KBM-7 (cell line): ENCODE measurements at regions of chr2 and their contacts with region 1.

Region 1: DNA sequence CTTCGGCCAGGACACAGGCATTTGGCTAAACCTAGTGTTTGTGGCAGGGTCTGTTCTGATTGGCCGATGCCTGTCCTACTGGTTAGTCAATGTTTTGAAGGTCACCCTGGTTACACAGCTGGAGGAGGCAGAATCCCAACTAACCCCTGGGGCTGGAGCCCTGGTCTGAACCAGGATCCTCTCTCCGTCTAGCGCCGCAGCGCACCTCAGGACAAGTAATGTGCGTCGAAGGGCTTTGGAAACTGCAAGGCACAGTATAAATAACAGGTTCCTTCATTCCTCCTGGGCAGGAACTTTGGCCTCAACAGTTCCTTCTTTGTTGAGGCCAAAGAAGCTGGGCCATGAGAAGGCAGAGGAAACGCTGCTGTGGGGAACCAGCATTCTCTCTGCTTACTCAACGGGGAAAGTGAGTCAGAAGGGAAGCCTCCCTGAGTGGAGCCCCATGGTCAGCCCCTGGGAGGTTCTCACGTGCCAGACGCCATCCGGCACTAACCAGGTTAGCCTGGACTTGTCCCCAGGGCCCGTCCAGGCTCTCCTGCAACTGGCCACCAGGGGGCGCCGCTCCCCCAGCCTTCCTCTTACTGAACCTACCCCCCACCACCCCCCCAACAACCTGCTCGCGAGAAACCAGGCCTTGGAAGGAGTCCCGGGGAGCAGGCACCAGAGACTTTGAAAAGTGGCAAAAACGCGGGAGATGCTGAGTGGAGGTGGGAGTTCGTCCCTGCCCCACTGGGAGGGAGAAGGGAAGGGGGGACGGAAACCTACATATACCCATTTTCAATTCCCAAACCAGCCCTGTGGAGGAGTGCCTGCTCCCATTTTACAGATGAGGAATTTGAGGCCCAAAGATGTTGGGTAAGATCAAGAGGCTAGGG is 19.8 kb downstream of the TEX44 start:
- DNase-seq: peak; percentile 96

Region 2: GRCh38 chr2:231541645-231542044 is 70.8 kb before region 1 on chr2:
- in situ Hi-C with region 1: no loop called
- DNase-seq: peak; percentile 64

Region 3: DNA sequence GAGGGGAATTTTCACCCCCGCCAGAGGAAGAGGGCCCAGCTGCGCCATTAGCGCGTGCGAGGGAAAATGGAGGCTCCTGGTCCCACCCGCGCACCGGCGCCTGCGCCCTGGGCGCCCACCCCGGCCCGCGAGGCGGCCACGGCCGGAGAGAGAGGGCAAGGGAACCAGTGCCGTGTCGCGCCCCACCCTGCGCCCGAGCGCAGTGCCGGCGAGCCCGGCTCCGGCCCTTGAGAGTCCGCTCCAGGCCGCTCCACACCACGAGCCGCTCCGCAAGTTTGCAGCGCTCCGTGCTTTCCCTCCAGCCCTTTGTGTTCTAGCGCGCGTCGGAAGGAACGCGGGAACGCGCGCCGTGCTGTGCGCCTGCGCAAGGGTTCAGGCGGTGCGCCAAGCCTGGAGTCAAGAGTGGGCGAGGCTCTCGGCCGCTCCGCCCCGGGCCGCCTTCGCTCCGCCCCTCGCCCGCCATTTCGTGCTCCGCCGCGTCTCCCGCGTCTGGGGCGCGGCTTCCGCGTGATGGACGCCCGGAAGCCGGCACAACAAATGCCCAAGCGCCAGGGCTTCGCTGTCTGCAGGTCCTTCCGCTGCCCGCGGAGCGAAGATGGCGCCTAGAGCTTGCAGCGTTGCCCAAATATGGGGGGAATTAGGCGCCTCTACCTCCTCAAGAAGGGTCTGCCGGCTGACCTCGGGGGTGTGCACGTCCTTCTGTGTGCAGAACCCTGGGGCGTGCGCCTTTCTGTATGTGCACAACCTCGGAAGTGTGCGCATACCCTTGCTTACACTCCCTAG is 49.8 kb after region 1 on chr2:
- in situ Hi-C with region 1: loop called (anchors 10 kb)
- DNase-seq: peak; percentile 99